ENCODE measurements at regions of chr19 and their contacts with region 1.

Region 1: DNA sequence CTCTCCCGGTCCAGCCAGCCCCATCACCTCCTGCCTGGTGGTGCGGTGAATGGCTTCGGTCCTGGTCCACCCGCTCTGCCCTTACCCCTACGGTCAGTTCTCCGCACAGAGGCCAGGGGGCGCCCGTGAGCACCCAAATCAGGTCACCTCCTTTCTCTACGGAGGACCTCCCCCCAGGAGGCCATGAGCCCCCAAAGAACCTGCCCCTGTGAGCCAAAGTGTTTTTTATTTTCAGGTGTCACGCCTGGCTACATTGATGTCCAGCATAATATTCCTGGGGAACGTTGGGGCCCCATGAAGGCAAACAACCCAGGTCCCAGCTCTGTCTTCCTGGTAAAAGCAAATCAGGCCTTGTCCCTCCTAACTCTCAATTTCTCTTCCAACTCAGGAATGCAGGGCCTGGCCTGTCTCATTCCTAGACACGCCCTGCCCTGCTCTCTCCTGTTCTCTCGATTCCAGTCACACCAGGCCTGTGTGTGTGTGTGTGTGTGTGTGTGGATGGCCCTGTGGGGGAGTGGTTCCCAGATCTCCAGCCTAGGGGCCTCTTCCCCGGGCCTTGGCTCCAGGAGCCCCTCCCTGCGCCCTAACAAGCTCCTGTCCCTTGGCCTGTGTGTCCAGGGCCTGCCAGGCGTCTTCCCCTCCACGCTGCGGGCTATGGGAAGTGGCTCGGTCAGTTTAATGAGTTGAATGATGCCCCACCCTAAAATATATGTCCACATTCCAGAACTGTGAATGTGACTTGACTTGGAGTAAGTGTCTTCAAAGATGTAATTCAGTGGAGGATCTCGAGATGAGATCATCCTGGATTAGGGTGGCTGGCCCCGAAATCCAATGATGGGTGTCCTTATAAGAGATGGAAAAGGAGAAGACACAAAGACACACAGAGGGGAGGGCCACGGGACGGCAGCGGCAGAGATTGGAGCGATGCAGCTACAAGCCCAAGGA is 9.8 kb upstream of the GIPC1 start:
- DNase-seq: peak; percentile 89 to 93
- H3K4me3 ChIP-seq: no peak overlapping the region
- H3K4me3 Mint-ChIP-seq: peak overlapping the region; percentile 58
- H3K27ac Mint-ChIP-seq: peak overlapping the region; percentile 94
- H3K4me1 ChIP-seq: peaks cover 54% of the 10 kb centered on the region
- H3K4me1 Mint-ChIP-seq: peaks cover 50% of the 10 kb centered on the region
- H3K27me3 ChIP-seq: no peaks in the 10 kb centered on the region
- H3K27me3 Mint-ChIP-seq: no peaks in the 10 kb centered on the region
- CTCF ChIP-seq: peak; percentile 88 to 92

Region 2: GRCh38 chr19:14006243-14006765 is 499.5 kb before region 1 on chr19 and contains the start of gene RFX1:
- CTCF ChIA-PET with region 1: no interaction called
- POLR2A ChIA-PET with region 1: no interaction called
- intact Hi-C with region 1: loop called (anchors 5 kb)
- DNase-seq: peak; percentile 99
- H3K4me3 ChIP-seq: peak within 1 kb of the TSS; percentile 93
- H3K4me3 Mint-ChIP-seq: peak within 1 kb of the TSS; percentile 84
- H3K27ac Mint-ChIP-seq: peak within 1 kb of the TSS; percentile 98
- H3K4me1 ChIP-seq: no peaks in the 10 kb centered on the region
- H3K4me1 Mint-ChIP-seq: no peaks in the 10 kb centered on the region
- H3K27me3 ChIP-seq: no peaks in the 10 kb centered on the region
- H3K27me3 Mint-ChIP-seq: no peaks in the 10 kb centered on the region
- CTCF ChIP-seq: no peak
- total RNA-seq, gene RFX1: 11.5 and 13.4 TPM in 2 replicates

Region 3: DNA sequence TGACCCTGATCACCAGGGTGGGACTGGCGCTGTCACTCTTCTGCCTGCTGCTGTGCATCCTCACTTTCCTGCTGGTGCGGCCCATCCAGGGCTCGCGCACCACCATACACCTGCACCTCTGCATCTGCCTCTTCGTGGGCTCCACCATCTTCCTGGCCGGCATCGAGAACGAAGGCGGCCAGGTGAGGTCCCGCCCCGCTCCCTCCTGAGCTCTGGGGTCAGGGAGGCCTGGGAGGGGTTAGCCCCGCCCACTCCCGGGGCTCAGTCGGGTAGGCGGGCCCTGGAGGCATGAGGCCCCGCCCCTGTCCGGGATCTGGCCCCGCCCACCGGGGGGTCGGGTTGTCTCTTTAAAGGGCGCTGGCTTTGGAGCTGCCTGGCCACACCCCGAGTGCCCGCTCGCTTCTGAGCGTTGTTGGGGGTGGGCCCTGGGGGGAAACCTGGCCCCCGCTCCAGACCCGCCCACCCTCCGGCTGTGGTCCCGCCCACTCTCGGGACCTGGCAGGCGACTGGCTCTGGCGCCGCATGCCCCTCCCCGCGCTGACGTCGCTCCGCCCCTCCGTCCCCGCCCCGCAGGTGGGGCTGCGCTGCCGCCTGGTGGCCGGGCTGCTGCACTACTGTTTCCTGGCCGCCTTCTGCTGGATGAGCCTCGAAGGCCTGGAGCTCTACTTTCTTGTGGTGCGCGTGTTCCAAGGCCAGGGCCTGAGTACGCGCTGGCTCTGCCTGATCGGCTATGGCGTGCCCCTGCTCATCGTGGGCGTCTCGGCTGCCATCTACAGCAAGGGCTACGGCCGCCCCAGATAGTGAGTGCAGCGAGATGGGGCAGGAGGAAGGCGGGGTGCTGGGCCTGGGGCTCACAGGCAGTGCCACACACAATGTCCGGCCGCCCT is 99.8 kb before region 1 on chr19:
- CTCF ChIA-PET with region 1: no interaction called
- POLR2A ChIA-PET with region 1: no interaction called
- intact Hi-C with region 1: no loop called
- DNase-seq: peak; percentile 57 to 69
- H3K4me3 ChIP-seq: no peak overlapping the region
- H3K4me3 Mint-ChIP-seq: no peak overlapping the region
- H3K27ac Mint-ChIP-seq: peak overlapping the region; percentile 57
- H3K4me1 ChIP-seq: no peaks in the 10 kb centered on the region
- H3K4me1 Mint-ChIP-seq: no peaks in the 10 kb centered on the region
- H3K27me3 ChIP-seq: no peaks in the 10 kb centered on the region
- H3K27me3 Mint-ChIP-seq: no peaks in the 10 kb centered on the region
- CTCF ChIP-seq: peak; percentile 34 to 43

Region 4: GRCh38 chr19:14450168-14450874 is 55.4 kb before region 1 on chr19:
- CTCF ChIA-PET with region 1: no interaction called
- POLR2A ChIA-PET with region 1: no interaction called
- intact Hi-C with region 1: no loop called
- DNase-seq: peak; percentile 71 to 81
- H3K4me3 ChIP-seq: no peak overlapping the region
- H3K4me3 Mint-ChIP-seq: no peak overlapping the region
- H3K27ac Mint-ChIP-seq: no peak overlapping the region
- H3K4me1 ChIP-seq: no peaks in the 10 kb centered on the region
- H3K4me1 Mint-ChIP-seq: no peaks in the 10 kb centered on the region
- H3K27me3 ChIP-seq: no peaks in the 10 kb centered on the region
- H3K27me3 Mint-ChIP-seq: no peaks in the 10 kb centered on the region
- CTCF ChIP-seq: no peak

Region 5: DNA sequence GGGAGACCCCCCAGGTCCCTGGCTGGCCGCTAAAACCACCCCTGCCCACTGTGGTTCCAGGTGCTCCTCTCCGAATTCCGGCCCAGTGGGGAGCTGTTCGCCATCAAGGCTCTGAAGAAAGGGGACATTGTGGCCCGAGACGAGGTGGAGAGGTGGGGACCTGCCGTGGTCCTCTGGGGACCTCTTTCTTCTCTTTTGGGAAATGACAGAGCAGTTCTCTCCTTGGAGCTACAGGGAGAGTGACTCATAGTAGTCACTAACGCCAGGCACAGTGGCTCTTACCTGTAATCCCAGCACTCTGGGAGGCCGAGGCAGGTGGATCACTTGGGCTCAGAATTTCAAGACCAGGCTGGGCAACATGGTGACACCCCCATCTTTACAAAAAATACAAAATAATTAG is 37.9 kb before region 1 on chr19:
- CTCF ChIA-PET with region 1: no interaction called
- POLR2A ChIA-PET with region 1: no interaction called
- intact Hi-C with region 1: no loop called
- DNase-seq: no peak
- H3K4me3 ChIP-seq: no peak overlapping the region
- H3K4me3 Mint-ChIP-seq: no peak overlapping the region
- H3K27ac Mint-ChIP-seq: no peak overlapping the region
- H3K4me1 ChIP-seq: no peaks in the 10 kb centered on the region; the same call in 1 of the 2 replicates
- H3K4me1 Mint-ChIP-seq: no peaks in the 10 kb centered on the region
- H3K27me3 ChIP-seq: no peaks in the 10 kb centered on the region
- H3K27me3 Mint-ChIP-seq: no peaks in the 10 kb centered on the region
- CTCF ChIP-seq: no peak

Region 6: GRCh38 chr19:14556662-14557188 is 51.0 kb after region 1 on chr19:
- CTCF ChIA-PET with region 1: interaction called, 3 read pairs
- POLR2A ChIA-PET with region 1: no interaction called
- intact Hi-C with region 1: loop called (anchors 1 kb)
- DNase-seq: peak in 1 of 2 experiments; percentile 65
- H3K4me3 ChIP-seq: no peak overlapping the region
- H3K4me3 Mint-ChIP-seq: no peak overlapping the region
- H3K27ac Mint-ChIP-seq: peak overlapping the region; percentile 28
- H3K4me1 ChIP-seq: no peaks in the 10 kb centered on the region
- H3K4me1 Mint-ChIP-seq: peaks cover 4% of the 10 kb centered on the region
- H3K27me3 ChIP-seq: no peaks in the 10 kb centered on the region
- H3K27me3 Mint-ChIP-seq: no peaks in the 10 kb centered on the region
- CTCF ChIP-seq: peak; percentile 67 to 83

Region 7: DNA sequence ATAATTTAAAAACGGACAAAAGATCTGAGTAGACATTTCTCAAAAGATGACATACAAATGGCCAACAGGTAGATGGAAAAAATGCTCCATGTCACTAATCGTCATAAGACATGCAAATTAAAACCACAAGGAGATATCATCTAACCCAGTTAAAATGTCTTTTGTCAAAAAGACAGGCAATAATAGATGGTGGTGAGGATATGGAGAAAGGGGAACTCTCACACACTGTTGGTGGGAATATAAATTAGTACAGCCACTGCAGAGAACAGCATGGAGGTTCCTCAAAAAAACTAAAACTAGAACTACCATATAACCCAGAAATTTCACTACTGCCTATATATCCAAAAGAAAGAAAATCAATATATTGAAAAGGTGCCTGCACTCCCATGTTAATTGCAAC is 1480.9 kb after region 1 on chr19:
- CTCF ChIA-PET with region 1: no interaction called
- POLR2A ChIA-PET with region 1: no interaction called
- intact Hi-C with region 1: no loop called
- DNase-seq: no peak
- H3K4me3 ChIP-seq: no peak overlapping the region
- H3K4me3 Mint-ChIP-seq: no peak overlapping the region
- H3K27ac Mint-ChIP-seq: no peak overlapping the region
- H3K4me1 ChIP-seq: no peaks in the 10 kb centered on the region
- H3K4me1 Mint-ChIP-seq: no peaks in the 10 kb centered on the region
- H3K27me3 ChIP-seq: no peaks in the 10 kb centered on the region
- H3K27me3 Mint-ChIP-seq: peaks cover 3% of the 10 kb centered on the region
- CTCF ChIP-seq: no peak